ENCODE measurements at regions of chr5 and their contacts with region 1.

Region 1: DNA sequence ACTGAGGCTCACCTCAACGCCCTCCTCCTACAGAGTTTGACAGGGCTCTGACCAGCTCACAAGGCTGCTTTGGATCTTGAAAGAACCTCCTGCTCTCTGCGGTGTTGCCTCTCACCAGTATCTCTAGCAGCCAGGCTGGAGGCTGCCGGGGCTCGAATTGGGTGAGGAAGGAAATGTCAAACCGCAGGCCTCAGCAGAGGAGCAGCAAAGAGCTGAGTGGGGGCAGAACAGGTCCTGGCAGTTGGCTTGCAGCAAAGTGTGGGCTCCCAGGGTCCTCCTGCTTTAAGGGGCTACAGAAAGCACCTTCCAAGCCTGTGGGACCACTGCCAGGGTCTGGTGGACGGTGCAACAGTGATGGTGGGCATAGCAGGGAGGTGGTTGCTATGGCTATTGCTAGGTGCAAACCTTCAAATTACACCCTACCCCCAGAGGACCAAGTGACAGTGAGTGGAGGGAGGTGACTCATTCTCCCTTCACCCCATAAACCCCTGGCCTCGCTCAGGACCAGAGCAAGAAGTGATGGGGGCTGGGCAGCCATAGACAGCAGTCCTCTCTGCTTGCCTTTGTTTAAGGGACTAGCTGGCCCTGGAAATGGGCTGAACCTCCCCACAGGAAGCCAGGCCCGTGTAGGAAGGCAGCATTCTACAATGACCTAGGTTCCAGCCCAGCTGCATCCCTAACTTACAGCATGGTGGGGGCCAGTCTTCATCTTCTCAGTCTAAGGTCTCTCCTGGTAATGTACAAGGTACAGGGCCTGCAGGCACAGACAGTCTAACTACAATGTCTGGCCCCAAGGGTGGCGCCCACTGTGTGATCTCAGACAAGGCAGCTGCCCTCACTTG is 18.7 kb downstream of the LCP2 start:
- DNase-seq: peak; percentile 33 to 46
- ATAC-seq: peak; percentile 44 to 74 (median 58)
- H3K4me3 ChIP-seq: peak overlapping the region in 1 of 10 donors; percentile 26
- H3K27ac ChIP-seq: peak overlapping the region in 5 of 10 donors; percentile 6 to 87 (median 29)
- H3K4me1 ChIP-seq: peaks cover 0 to 97% (median 20%) of the 10 kb centered on the region in 9 donors
- H3K27me3 ChIP-seq: no peaks in the 10 kb centered on the region
- CTCF ChIP-seq: no peak

Region 2: GRCh38 chr5:170161069-170161468 is 117.8 kb before region 1 on chr5:
- intact Hi-C with region 1: no loop called
- DNase-seq: no peak
- ATAC-seq: no peak
- H3K4me3 ChIP-seq: no peak overlapping the region
- H3K27ac ChIP-seq: no peak overlapping the region
- H3K4me1 ChIP-seq: no peaks in the 10 kb centered on the region
- H3K27me3 ChIP-seq: no peaks in the 10 kb centered on the region
- CTCF ChIP-seq: no peak

Region 3: GRCh38 chr5:170316937-170317336 is 38.1 kb after region 1 on chr5:
- intact Hi-C with region 1: no loop called
- DNase-seq: no peak
- ATAC-seq: no peak
- H3K4me3 ChIP-seq: no peak overlapping the region
- H3K27ac ChIP-seq: no peak overlapping the region
- H3K4me1 ChIP-seq: peaks cover 4 to 41% (median 16%) of the 10 kb centered on the region in 9 donors
- H3K27me3 ChIP-seq: no peaks in the 10 kb centered on the region
- CTCF ChIP-seq: no peak

Region 4: GRCh38 chr5:170327168-170327567 is 48.3 kb after region 1 on chr5:
- intact Hi-C with region 1: no loop called
- DNase-seq: no peak
- ATAC-seq: no peak
- H3K4me3 ChIP-seq: no peak overlapping the region
- H3K27ac ChIP-seq: peak overlapping the region in 1 of 10 donors; percentile 44
- H3K4me1 ChIP-seq: peaks cover 6 to 54% (median 16%) of the 10 kb centered on the region in 9 donors
- H3K27me3 ChIP-seq: no peaks in the 10 kb centered on the region
- CTCF ChIP-seq: no peak

Region 5: DNA sequence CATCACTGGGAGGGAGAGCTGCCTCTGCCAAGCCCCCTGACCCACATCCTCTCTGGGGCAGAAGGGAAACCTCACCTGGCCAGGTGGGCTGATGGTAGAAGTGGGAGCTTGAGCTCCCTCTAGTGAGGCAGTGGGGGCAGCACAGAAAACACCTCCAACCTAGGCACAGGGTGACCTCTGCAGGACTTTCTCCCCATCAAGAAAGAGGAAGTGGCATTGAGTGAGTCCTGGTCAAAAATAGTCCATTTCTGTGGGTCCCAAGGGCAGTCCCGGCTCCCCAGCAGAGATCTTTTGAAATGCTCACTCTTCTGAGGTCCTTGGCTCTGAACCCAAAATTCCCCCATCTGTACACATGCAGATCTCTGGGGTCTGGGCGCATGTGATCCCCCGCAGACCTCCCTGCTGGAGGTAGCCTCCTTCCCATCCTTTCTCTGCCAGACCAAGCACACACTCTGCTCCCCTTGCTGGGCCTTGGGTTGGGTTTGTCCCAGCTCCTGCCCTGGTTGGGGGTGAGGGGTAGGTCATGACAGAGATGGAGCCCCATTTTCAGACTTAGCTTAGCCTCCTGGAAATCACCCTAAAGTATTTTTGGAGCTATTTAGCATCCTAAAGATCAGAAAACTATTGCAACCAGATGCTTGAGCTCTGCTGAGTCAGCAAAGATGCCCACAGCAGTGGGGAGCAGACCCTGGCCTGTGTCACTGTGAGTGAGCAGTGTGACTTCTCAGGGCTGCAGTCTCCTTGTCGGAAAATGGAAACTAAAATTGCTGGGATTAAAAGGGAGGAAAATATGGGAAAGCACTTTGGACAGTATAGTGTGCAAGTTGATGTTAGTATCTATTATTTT is 60.3 kb after region 1 on chr5:
- intact Hi-C with region 1: loop called in 1 of 10 experiments (anchors 5 kb)
- DNase-seq: no peak
- ATAC-seq: peak in 5 of 8 donors; percentile 43 to 58 (median 51)
- H3K4me3 ChIP-seq: no peak overlapping the region
- H3K27ac ChIP-seq: no peak overlapping the region
- H3K4me1 ChIP-seq: peaks cover 0 to 49% (median 0%) of the 10 kb centered on the region in 9 donors
- H3K27me3 ChIP-seq: no peaks in the 10 kb centered on the region
- CTCF ChIP-seq: peak; percentile 19 to 72 (median 46)

Region 6: DNA sequence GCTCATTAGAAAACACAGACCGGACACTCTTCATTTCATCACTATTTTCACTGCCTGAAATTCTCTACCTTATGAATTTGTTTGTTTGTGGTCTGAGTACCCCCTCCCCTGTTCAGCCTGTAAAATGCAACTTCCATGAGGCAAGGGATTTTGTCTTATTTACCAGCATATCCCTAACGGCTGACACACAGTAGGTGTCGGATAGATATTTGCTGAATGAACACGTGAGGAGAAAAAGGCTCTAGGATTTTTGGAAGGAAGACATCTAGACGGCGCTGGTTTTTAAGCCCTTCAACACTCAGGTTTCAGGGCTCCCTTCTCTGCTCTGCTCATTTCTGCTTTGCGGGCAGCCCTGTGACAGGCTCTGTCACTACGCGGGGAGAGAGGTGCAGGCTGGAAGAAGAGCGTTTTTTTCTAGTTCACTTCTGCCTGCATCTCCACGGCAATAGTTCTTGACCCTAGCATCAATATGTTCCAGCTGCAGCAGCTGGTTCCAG is 69.4 kb after region 1 on chr5:
- intact Hi-C with region 1: loop called in 1 of 10 experiments (anchors 5 kb)
- DNase-seq: no peak
- ATAC-seq: peak in 6 of 8 donors; percentile 22 to 68 (median 50)
- H3K4me3 ChIP-seq: no peak overlapping the region
- H3K27ac ChIP-seq: peak overlapping the region in 3 of 10 donors; percentile 6 to 43 (median 21)
- H3K4me1 ChIP-seq: peaks cover 0 to 22% (median 9%) of the 10 kb centered on the region in 9 donors
- H3K27me3 ChIP-seq: peaks cover 0 to 45% (median 20%) of the 10 kb centered on the region in 7 donors
- CTCF ChIP-seq: peak in 8 of 9 donors; percentile 7 to 56 (median 35)

Region 7: DNA sequence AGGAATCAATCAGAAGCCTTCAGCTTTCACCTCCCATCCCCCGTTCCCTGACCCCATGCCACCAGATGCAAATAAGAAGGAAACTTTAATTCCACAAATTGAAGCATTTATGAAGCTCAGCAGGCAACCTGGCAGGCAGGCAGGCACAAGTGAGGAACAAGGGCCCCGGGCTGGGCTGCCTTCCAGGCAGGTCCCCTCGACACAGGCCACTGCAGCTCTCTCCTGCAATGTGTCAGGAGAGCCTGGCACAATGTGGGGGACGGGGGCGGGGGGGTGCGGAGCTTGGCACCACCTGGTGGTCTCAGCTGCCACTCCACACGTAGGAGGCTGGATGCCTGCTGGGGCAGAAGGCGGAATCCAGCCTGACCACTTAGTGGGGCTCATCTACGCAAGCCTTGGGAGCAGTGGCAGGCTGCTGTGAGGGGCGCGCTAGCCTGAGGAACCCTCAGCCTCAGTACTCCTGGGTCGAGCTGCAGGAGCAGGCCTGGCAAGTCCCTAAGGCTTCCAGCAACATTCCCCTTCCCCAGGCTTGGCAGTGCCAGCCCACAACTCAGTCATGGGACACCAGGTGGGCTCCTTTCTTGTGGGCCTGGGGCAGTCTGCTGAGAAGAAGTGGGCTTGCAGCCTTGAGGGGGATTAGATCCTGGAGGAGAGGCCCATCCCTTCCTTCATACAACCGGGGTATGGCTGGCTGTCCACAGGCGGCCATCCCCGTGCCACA is 160.6 kb after region 1 on chr5:
- intact Hi-C with region 1: no loop called
- DNase-seq: no peak
- ATAC-seq: no peak
- H3K4me3 ChIP-seq: no peak overlapping the region
- H3K27ac ChIP-seq: no peak overlapping the region
- H3K4me1 ChIP-seq: no peaks in the 10 kb centered on the region
- H3K27me3 ChIP-seq: peaks cover 0 to 4% (median 0%) of the 10 kb centered on the region in 7 donors
- CTCF ChIP-seq: no peak